Esophagus squamous epithelium (tissue), 5 donors: ENCODE measurements at regions of chr3 and their contacts with region 1.

Region 1: GRCh38 chr3:127544192-127544802 is 46.2 kb downstream of the TPRA1 start:
- DNase-seq: no peak
- H3K4me3 ChIP-seq: no peak overlapping the region
- H3K27ac ChIP-seq: peak overlapping the region in 1 of 4 donors; percentile 49
- H3K4me1 ChIP-seq: peaks cover 9 to 21% (median 12%) of the 10 kb centered on the region in 3 donors
- H3K27me3 ChIP-seq: no peaks in the 10 kb centered on the region
- CTCF ChIP-seq: peak; percentile 74 to 85 (median 78)
- POLR2A ChIP-seq: no peak

Region 2: GRCh38 chr3:126522363-126522788 is 1021.9 kb before region 1 on chr3:
- intact Hi-C with region 1: loop called (anchors 2 kb)
- DNase-seq: no peak
- H3K4me3 ChIP-seq: no peak overlapping the region
- H3K27ac ChIP-seq: no peak overlapping the region
- H3K4me1 ChIP-seq: peaks cover 3 to 17% (median 11%) of the 10 kb centered on the region in 3 donors
- H3K27me3 ChIP-seq: peaks cover 0 to 65% (median 5%) of the 10 kb centered on the region in 4 donors
- CTCF ChIP-seq: peak; percentile 52 to 97 (median 86)
- POLR2A ChIP-seq: no peak

Region 3: GRCh38 chr3:126679318-126679751 is 865.0 kb before region 1 on chr3:
- intact Hi-C with region 1: loop called (anchors 5 kb)
- DNase-seq: peak; percentile 11
- H3K4me3 ChIP-seq: no peak overlapping the region
- H3K27ac ChIP-seq: no peak overlapping the region
- H3K4me1 ChIP-seq: peaks cover 0 to 24% (median 0%) of the 10 kb centered on the region in 3 donors
- H3K27me3 ChIP-seq: peaks cover 0 to 37% (median 0%) of the 10 kb centered on the region in 4 donors
- CTCF ChIP-seq: peak; percentile 77 to 99 (median 89)
- POLR2A ChIP-seq: no peak

Region 4: GRCh38 chr3:126870608-126871210 is 673.6 kb before region 1 on chr3:
- intact Hi-C with region 1: no loop called
- DNase-seq: no peak
- H3K4me3 ChIP-seq: no peak overlapping the region
- H3K27ac ChIP-seq: no peak overlapping the region
- H3K4me1 ChIP-seq: no peaks in the 10 kb centered on the region
- H3K27me3 ChIP-seq: no peaks in the 10 kb centered on the region
- CTCF ChIP-seq: no peak
- POLR2A ChIP-seq: no peak